Activated T-helper 1 cell treated with anti-CD3 and anti-CD28 coated beads, Interleukin-12 subunit alpha, Interleukin-12 subunit beta, Interleukin-2, Interleukin-4 antibody, amounts not matched to agents 30 ng/mL and 10 ng/mL and 1 ng/mL, durations not matched to agents 14 hours and 24 hours and 36 hours (primary cell): ENCODE measurements at regions of chr6 and their contacts with region 1.

Region 1: DNA sequence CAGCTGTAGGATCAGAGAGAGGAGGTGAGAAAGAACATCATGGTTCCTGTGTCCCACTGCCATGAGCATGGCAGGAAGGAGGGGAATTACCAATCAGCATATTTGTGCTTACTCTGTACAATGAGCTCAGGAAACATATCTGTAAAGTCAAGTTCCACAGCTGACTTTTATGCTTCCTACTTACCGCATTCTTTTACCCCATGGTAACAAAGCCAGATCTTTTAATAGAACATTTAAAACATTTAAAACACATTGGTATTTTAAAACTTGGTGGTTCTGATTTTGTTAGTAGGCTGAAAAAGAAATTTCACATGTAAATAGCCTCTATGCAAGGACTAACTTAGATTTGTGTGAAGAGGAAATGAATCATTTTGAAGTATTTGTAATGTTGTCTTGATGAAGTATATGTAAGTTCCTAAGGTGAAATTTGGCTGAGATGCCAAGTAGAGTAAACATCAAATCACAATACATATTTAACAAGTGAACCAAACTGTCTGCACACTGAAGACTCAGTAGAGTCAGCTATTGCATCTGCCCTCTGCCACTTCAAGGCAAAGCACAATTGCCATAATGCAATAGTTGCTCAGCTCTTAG is 114.7 kb downstream of the GJA10 start:
- DNase-seq: no peak
- H3K4me3 Mint-ChIP-seq: peak overlapping the region; percentile 37
- H3K27ac Mint-ChIP-seq: peak overlapping the region; percentile 69
- H3K4me1 Mint-ChIP-seq: peaks cover 38% of the 10 kb centered on the region
- H3K27me3 Mint-ChIP-seq: no peaks in the 10 kb centered on the region

Region 2: GRCh38 chr6:89758830-89759229 is 250.2 kb before region 1 on chr6:
- intact Hi-C with region 1: no loop called
- DNase-seq: no peak
- H3K4me3 Mint-ChIP-seq: no peak overlapping the region
- H3K27ac Mint-ChIP-seq: no peak overlapping the region
- H3K4me1 Mint-ChIP-seq: no peaks in the 10 kb centered on the region
- H3K27me3 Mint-ChIP-seq: no peaks in the 10 kb centered on the region

Region 3: DNA sequence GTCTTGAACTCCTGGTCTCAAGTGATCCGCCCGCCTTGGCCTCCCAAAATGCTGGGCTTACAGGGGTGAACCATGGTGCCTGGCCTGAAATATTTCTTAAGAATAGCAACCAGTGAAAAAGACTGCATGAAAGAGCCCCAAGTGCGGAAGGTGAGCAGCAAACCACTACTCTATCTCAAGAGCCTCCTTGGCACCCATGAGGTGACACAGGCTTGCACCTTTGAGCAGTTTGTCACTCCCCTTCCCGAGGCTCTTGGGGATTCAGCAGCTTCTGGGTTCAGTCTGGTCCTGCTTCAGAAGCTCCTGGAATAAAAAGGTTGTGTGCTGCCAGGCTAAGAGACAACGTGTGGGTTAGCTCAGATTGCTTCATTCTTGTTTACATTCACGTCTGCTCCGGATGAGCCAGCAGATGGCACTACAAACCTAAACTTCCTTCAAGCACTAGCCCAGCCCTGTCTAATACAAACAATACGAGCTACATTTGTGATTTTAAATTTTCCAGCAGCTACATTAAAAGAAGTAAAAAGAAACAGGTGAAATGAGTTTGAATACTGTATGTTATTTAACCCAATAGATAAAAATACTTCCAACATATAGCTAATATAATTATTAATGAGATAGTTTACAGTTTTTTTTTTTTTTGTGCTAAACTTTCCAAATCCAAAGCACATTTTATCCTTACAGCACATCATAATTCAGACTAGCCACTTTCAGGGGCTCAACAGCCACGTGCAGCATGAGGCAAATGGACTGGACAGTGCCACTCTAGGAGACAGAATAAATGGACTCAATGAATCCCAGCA is 68.6 kb before region 1 on chr6:
- intact Hi-C with region 1: loop called (anchors 2 kb)
- DNase-seq: peak; percentile 57
- H3K4me3 Mint-ChIP-seq: no peak overlapping the region
- H3K27ac Mint-ChIP-seq: no peak overlapping the region
- H3K4me1 Mint-ChIP-seq: peaks cover 25% of the 10 kb centered on the region
- H3K27me3 Mint-ChIP-seq: no peaks in the 10 kb centered on the region

Region 4: GRCh38 chr6:89952686-89953085 is 56.3 kb before region 1 on chr6:
- intact Hi-C with region 1: loop called (anchors 2 kb)
- DNase-seq: peak; percentile 54
- H3K4me3 Mint-ChIP-seq: peak overlapping the region; percentile 53
- H3K27ac Mint-ChIP-seq: peak overlapping the region; percentile 61
- H3K4me1 Mint-ChIP-seq: peaks cover 71% of the 10 kb centered on the region
- H3K27me3 Mint-ChIP-seq: no peaks in the 10 kb centered on the region

Region 5: GRCh38 chr6:89984926-89985750 is 23.9 kb before region 1 on chr6:
- intact Hi-C with region 1: loop called (anchors 2 kb)
- DNase-seq: no peak
- H3K4me3 Mint-ChIP-seq: no peak overlapping the region
- H3K27ac Mint-ChIP-seq: peak overlapping the region; percentile 36
- H3K4me1 Mint-ChIP-seq: peaks cover 68% of the 10 kb centered on the region
- H3K27me3 Mint-ChIP-seq: peaks cover 1% of the 10 kb centered on the region

Region 6: DNA sequence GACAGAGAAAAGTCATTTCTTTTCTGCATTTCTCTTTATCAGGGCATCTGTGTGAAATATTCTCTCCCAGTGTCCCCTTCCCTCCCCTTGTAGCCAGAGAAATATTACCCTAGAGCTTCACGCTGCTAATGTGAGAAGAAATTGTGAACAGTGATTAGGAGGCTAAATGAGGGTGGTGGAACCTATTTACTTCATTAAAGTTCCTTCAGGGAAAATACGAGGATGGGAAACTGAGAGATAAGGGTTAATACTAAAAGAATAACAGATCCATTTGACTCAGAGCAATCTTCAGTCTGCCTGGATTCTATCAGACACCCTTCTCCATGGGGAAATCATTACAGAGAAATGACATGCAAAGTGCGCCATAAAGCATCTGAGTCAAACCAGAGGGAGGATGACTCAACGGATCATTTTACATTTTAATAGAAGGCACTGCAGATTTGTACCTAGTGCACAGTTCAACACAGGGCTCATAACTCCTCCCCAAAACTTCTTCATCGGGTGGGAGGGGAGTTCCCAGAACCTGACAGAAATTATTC is 16.6 kb after region 1 on chr6:
- intact Hi-C with region 1: loop called (anchors 1 kb)
- DNase-seq: no peak
- H3K4me3 Mint-ChIP-seq: peak overlapping the region; percentile 69
- H3K27ac Mint-ChIP-seq: peak overlapping the region; percentile 95
- H3K4me1 Mint-ChIP-seq: peaks cover 77% of the 10 kb centered on the region
- H3K27me3 Mint-ChIP-seq: no peaks in the 10 kb centered on the region

Region 7: DNA sequence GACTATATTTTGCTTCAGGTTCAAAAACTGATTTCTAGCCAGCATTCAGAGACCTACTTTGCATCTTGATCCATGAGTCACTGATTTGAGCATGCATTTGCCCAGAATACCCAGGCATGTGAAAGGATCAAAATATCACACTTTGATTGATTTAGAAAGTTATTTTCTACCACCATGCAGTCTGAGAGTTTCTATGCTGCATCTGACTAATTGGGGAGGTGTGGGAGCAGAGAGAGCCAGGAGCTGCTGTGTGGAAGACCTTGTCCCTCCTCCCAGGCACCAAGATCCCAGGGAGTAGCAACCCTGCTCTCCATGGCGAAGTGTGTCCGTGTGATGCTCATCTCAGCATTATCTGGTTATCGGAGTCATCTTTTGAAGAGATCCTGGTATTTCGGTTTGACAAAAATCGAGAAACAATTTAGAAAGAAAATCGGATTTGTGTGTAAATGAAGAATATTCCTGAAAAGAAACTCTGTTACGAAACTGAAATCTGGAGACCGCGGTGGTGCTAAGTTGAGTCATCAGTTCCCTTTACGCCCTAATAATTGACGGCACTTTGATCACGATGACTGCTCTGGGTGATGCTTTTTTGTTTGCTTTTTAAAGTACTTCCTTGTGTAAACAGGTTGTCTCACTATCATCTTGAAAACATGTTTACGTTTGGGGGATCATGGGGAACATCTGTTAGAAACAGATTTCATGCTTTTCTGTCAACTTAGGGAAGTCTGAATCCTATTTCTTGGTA is 94.2 kb after region 1 on chr6:
- intact Hi-C with region 1: loop called (anchors 1 kb)
- DNase-seq: no peak
- H3K4me3 Mint-ChIP-seq: peak overlapping the region; percentile 79
- H3K27ac Mint-ChIP-seq: peak overlapping the region; percentile 88
- H3K4me1 Mint-ChIP-seq: peaks cover 70% of the 10 kb centered on the region
- H3K27me3 Mint-ChIP-seq: no peaks in the 10 kb centered on the region